ENCODE measurements at regions of chr7 and their contacts with region 1.

Region 1: GRCh38 chr7:75771224-75771623 is 787 bp downstream of the CCL26 start:
- DNase-seq: peak; percentile 54
- ATAC-seq: 0 out of 2 replicates have a peak, but pooled peaks have one; percentile 10
- H3K4me3 ChIP-seq: no peak overlapping the region
- H3K27ac ChIP-seq: peak overlapping the region; percentile 88
- H3K4me1 ChIP-seq: peaks cover 22% of the 10 kb centered on the region
- H3K27me3 ChIP-seq: no peaks in the 10 kb centered on the region
- CTCF ChIP-seq: no peak

Region 2: GRCh38 chr7:74133671-74134048 is 1637.6 kb before region 1 on chr7:
- CTCF ChIA-PET with region 1: no interaction called
- POLR2A ChIA-PET with region 1: interaction called, 15 read pairs
- intact Hi-C with region 1: no loop called
- DNase-seq: peak; percentile 96
- ATAC-seq: peak; percentile 85
- H3K4me3 ChIP-seq: no peak overlapping the region
- H3K27ac ChIP-seq: peak overlapping the region; percentile 57
- H3K4me1 ChIP-seq: peaks cover 6% of the 10 kb centered on the region; the same call in 1 of the 2 replicates
- H3K27me3 ChIP-seq: no peaks in the 10 kb centered on the region
- CTCF ChIP-seq: no peak

Measured in PC-3 (cell line).